CD4-positive, alpha-beta memory T cell (primary cell): ENCODE measurements at regions of chr3 and their contacts with region 1.

Region 1: GRCh38 chr3:141231101-141231935 is at the start of gene PXYLP1:
- DNase-seq: peak; percentile 88 to 90 (median 89)
- H3K4me3 ChIP-seq: peak within 1 kb of the TSS; percentile 38 to 93
- H3K4me3 Mint-ChIP-seq: peak within 1 kb of the TSS; percentile 87 to 98 (median 93)
- H3K27ac ChIP-seq: peak within 1 kb of the TSS; percentile 81
- H3K27ac Mint-ChIP-seq: peak within 1 kb of the TSS; percentile 92 to 98 (median 96)
- H3K4me1 ChIP-seq: peaks cover 27% of the 10 kb centered on the region
- H3K4me1 Mint-ChIP-seq: peaks cover 28 to 59% (median 43%) of the 10 kb centered on the region in 4 donors
- H3K27me3 ChIP-seq: no peaks in the 10 kb centered on the region
- H3K27me3 Mint-ChIP-seq: peaks cover 0 to 2% of the 10 kb centered on the region in 2 donors
- total RNA-seq, gene PXYLP1: 17.2 to 22.6 TPM

Region 2: DNA sequence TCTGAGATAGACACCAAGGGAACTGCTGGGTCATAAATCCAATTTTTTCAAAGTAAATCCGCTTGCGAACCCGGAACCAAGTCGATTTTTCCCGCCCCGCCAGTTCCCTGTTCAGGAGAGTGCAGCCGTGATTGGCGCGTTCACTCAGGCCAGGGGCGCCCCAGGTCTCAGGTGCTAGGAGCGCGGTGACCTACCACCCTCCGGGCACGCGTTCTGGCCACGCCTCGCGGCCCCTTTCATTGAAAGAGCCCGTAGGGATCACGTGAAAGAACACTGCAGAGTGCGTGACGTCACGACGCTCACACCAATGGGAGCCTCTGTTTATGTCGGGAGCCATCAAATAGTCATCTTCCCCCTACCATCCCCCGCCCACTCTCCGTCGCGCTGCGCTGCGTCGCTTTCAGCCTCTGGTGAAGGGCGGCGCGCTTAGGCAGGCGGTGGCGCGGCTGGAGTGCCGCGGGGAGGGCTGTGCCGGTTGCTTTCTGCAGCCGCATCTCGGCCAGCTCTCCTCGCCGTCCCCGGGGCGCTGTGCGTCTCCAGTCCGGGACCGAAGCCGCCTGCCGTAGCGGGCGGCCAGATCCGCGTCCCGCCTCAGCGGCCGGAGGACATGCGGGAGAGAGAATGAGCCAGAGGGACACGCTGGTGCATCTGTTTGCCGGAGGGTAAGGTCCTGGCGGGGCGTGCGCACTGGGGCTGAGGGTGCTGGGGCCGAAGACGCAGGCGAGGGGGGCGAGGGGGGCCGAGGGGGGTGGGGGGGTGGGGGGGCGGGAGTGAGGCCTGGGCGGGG is 289.7 kb before region 1 on chr3 and contains the start of gene SLC25A36:
- CTCF ChIA-PET with region 1: interaction called, 3 read pairs
- POLR2A ChIA-PET with region 1: interaction called, 9 read pairs
- intact Hi-C with region 1: loop called (anchors 2 kb)
- DNase-seq: peak; percentile 93 to 97 (median 94)
- H3K4me3 ChIP-seq: peak within 1 kb of the TSS; percentile 64 to 90
- H3K4me3 Mint-ChIP-seq: peak within 1 kb of the TSS; percentile 89 to 99 (median 93)
- H3K27ac ChIP-seq: peak within 1 kb of the TSS; percentile 75
- H3K27ac Mint-ChIP-seq: peak within 1 kb of the TSS; percentile 97 to 100 (median 98)
- H3K4me1 ChIP-seq: peaks cover 28% of the 10 kb centered on the region
- H3K4me1 Mint-ChIP-seq: peaks cover 22 to 54% (median 39%) of the 10 kb centered on the region in 4 donors
- H3K27me3 ChIP-seq: no peaks in the 10 kb centered on the region
- H3K27me3 Mint-ChIP-seq: no peaks in the 10 kb centered on the region
- total RNA-seq, gene SLC25A36: 54.7 to 56.5 TPM

Region 3: GRCh38 chr3:141243271-141243707 is 12.0 kb after region 1 on chr3:
- CTCF ChIA-PET with region 1: interaction called, 180 read pairs
- POLR2A ChIA-PET with region 1: interaction called, 18 read pairs
- intact Hi-C with region 1: no loop called
- DNase-seq: peak; percentile 26 to 68 (median 32)
- H3K4me3 ChIP-seq: no peak overlapping the region
- H3K4me3 Mint-ChIP-seq: peak overlapping the region in 7 of 8 donors; percentile 36 to 72 (median 59)
- H3K27ac ChIP-seq: no peak overlapping the region
- H3K27ac Mint-ChIP-seq: peak overlapping the region in 6 of 7 donors; percentile 38 to 86 (median 59)
- H3K4me1 ChIP-seq: peaks cover 17% of the 10 kb centered on the region
- H3K4me1 Mint-ChIP-seq: peaks cover 17 to 23% (median 21%) of the 10 kb centered on the region in 4 donors
- H3K27me3 ChIP-seq: no peaks in the 10 kb centered on the region
- H3K27me3 Mint-ChIP-seq: no peaks in the 10 kb centered on the region

Region 4: DNA sequence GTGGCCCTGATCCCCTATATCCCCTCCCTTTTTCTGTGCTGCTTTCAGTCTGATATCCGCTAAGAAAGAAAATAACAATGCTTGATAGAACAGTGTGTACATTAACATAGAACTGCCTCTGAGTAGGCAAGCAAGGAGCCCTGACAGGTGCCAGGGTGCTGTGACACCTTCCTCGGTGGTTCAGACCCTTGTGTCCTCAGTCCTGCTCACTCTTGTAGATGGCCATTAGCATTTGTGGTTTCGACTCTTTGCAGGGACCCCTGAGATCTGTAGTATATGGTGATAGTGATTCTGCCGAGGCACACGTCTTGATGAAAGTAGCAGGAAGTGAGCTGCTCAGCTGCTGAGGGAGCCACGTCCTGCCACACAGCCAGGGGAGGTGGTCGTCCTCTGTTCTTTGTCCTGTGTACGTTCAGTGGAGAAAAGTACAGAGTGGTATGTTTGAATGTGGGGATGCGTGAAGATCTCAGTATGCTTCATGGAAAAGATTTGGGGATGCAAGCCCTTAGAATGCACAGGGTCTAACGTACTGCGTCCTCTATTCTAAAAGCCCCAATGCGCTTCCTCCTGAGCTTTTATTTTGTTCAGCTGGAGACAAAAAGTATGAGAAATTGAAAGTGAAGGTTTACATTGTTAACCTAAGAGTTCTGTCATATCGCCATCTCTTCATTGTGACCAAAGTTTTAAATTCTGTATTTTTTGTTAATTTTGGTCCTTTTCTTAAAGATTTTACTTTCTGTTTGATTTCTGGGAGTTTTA is 35.7 kb after region 1 on chr3:
- CTCF ChIA-PET with region 1: interaction called, 78 read pairs
- POLR2A ChIA-PET with region 1: interaction called, 130 read pairs
- intact Hi-C with region 1: loop called (anchors 1 kb)
- DNase-seq: peak; percentile 51 to 68 (median 58)
- H3K4me3 ChIP-seq: peak overlapping the region; percentile 54 to 66
- H3K4me3 Mint-ChIP-seq: peak overlapping the region; percentile 88 to 99 (median 92)
- H3K27ac ChIP-seq: peak overlapping the region; percentile 73
- H3K27ac Mint-ChIP-seq: peak overlapping the region; percentile 85 to 98 (median 96)
- H3K4me1 ChIP-seq: peaks cover 27% of the 10 kb centered on the region
- H3K4me1 Mint-ChIP-seq: peaks cover 17 to 57% (median 29%) of the 10 kb centered on the region in 4 donors
- H3K27me3 ChIP-seq: no peaks in the 10 kb centered on the region
- H3K27me3 Mint-ChIP-seq: no peaks in the 10 kb centered on the region

Region 5: GRCh38 chr3:141303481-141304223 is 72.3 kb after region 1 on chr3:
- CTCF ChIA-PET with region 1: interaction called, 24 read pairs
- POLR2A ChIA-PET with region 1: interaction called, 15 read pairs
- intact Hi-C with region 1: no loop called
- DNase-seq: peak; percentile 69 to 79 (median 76)
- H3K4me3 ChIP-seq: no peak overlapping the region
- H3K4me3 Mint-ChIP-seq: no peak overlapping the region
- H3K27ac ChIP-seq: no peak overlapping the region
- H3K27ac Mint-ChIP-seq: peak overlapping the region in 2 of 7 donors; percentile 7 to 25
- H3K4me1 ChIP-seq: peaks cover 39% of the 10 kb centered on the region
- H3K4me1 Mint-ChIP-seq: peaks cover 27 to 50% (median 45%) of the 10 kb centered on the region in 4 donors
- H3K27me3 ChIP-seq: no peaks in the 10 kb centered on the region
- H3K27me3 Mint-ChIP-seq: no peaks in the 10 kb centered on the region

Region 6: DNA sequence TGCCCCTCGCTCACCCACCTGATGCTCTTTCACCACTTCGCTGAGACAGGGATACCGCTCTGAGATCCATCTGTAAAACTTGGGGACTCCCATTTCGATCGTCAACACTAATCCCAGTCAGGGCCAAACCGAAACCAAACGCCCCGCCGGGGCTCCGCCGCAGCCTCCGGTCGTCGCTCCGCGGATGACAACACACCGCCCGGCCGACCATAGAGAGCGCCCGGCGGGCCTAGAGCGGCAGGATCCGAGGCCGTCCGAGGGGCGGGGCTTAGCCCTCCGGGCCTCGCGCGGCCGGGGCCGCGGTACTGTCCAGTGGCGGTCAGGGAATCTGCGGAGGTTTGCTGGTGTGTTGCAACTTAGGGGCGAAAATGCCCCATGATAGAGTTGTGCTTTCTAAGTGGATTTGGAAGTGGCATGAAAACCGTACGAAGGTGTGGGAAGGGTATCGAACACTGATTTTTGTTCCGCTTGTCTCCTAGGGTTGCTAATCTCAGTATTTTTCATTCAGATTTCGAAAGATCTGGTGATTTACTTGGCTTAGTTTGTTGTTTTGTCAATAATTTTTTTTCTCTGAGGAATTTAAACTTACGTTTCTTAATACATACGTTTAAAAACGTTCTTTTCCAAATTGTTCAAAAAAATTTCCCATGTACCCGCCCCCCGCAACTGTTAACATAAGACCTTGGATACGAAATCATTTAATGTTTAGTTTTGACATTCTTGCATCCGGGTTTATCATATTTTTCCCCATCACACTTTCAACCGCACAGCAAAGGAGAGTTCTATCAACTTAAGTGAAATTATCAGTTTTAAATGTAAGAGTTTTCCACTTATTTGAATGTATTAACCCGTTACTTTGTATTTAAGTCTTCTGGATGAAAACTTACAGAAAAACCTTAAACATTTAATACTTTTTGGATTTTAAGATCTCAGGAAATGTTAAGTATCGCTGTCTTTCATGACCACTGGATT is 1216.8 kb after region 1 on chr3 and contains the start of gene XRN1:
- CTCF ChIA-PET with region 1: no interaction called
- POLR2A ChIA-PET with region 1: no interaction called
- intact Hi-C with region 1: loop called (anchors 5 kb)
- DNase-seq: peak; percentile 94 to 98 (median 95)
- H3K4me3 ChIP-seq: peak within 1 kb of the TSS; percentile 96 to 99
- H3K4me3 Mint-ChIP-seq: peak within 1 kb of the TSS; percentile 98 to 100 (median 99)
- H3K27ac ChIP-seq: peak within 1 kb of the TSS; percentile 100
- H3K27ac Mint-ChIP-seq: peak within 1 kb of the TSS; percentile 99 to 100 (median 100)
- H3K4me1 ChIP-seq: peaks cover 44% of the 10 kb centered on the region
- H3K4me1 Mint-ChIP-seq: peaks cover 27 to 54% (median 41%) of the 10 kb centered on the region in 4 donors
- H3K27me3 ChIP-seq: no peaks in the 10 kb centered on the region
- H3K27me3 Mint-ChIP-seq: no peaks in the 10 kb centered on the region
- total RNA-seq, gene XRN1: 102 to 104 TPM